BJ (cell line): ENCODE measurements at regions of chr1 and their contacts with region 1.

Region 1: GRCh38 chr1:214808845-214809460 is 206.0 kb downstream of the CENPF start:
- DNase-seq: no peak
- H3K4me3 ChIP-seq: no peak overlapping the region
- H3K27me3 ChIP-seq: no peaks in the 10 kb centered on the region
- CTCF ChIP-seq: peak; percentile 42; the same call in 1 of the 2 replicates

Region 2: DNA sequence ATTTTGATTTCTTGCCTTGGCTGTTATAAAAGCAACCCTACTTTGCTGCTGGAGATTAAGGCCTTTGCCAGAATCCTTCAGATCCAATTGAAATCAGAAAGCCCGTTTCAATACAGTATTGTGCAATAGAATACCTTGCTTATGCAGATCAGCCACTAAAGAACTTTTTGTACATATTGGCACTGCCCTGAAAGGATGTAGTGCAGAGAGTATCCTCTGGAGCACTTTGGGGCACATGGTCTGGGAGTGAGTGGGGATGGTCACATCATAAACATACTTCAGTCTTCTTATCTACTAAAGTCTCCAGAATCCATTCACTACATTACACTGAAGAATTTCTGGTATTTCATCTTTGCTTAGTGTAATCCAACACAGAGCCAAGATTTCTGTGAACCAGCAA is 17.0 kb before region 1 on chr1:
- CTCF ChIA-PET with region 1: no interaction called
- POLR2A ChIA-PET with region 1: no interaction called
- DNase-seq: no peak
- H3K4me3 ChIP-seq: no peak overlapping the region
- H3K27me3 ChIP-seq: no peaks in the 10 kb centered on the region; the same call in 1 of the 2 replicates
- CTCF ChIP-seq: no peak

Region 3: DNA sequence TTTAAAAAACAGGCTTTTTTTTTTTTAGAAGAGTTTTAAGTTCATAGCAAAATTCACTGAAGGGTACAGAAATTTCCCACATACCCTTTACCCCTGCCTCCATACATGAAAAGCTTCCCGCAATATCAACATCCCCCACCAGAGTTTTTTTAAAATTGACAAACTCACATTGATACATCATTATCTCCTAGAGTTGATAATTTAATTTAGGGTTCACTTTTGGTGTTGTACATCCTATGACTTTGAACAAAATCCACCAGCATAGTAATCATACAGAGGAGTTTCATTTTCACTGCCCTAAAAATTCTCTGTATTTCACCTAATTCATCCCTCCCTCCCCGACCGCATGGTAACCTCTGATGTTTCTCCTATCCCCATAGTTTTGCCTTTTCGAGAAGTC is 220.0 kb after region 1 on chr1:
- CTCF ChIA-PET with region 1: no interaction called
- POLR2A ChIA-PET with region 1: interaction called, 10 read pairs
- DNase-seq: no peak
- H3K4me3 ChIP-seq: no peak overlapping the region
- H3K27me3 ChIP-seq: no peaks in the 10 kb centered on the region
- CTCF ChIP-seq: no peak

Region 4: GRCh38 chr1:215146341-215146826 is 337.4 kb after region 1 on chr1:
- CTCF ChIA-PET with region 1: interaction called, 10 read pairs
- POLR2A ChIA-PET with region 1: no interaction called
- DNase-seq: peak; percentile 8
- H3K4me3 ChIP-seq: no peak overlapping the region
- H3K27me3 ChIP-seq: no peaks in the 10 kb centered on the region
- CTCF ChIP-seq: peak; percentile 59